ENCODE measurements at regions of chr6 and their contacts with region 1.

Region 1: DNA sequence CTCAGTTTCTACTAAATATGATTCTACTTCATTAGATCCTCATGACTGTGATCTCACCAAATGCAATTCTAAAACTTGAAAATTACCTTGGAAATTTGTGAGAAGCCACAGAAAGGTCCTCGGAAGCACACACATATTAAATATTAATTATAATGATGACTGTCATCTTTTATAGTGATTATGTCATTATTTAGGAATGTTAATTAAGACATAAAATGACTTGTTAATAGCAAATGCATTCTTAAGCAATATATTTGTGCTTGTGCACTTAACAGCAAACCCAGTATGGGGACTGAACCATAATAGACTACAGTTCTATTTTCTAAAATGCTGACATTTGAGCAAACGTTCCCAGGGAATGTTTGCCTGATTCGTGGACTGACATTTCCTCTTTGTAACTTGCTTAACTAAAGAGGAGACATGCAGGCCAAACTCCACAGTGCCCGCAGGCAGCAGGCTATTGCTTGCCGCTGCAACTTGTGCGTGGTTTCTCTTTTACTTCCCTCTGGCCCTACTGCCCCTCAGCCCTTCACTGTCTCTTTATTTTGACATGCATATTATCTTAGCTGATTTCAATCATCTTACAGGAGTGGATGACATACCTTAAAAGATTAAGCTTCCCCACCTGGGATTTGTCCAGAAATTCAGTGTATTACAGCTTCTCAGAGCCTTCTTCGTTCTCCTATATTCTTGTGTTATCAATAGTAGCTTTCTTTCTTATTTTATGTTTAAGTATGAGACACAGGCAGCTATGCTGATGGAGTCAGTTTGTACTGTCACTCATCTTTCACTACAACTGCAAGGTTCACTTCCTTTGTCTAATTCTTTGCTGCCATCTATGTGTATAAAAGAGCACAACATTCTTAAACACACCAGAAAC is 141.5 kb downstream of the GMDS start:
- DNase-seq: peak; percentile 71
- ATAC-seq: peak; percentile 90
- H3K4me3 ChIP-seq: no peak overlapping the region
- H3K27ac ChIP-seq: no peak overlapping the region
- H3K4me1 ChIP-seq: peaks cover 4% of the 10 kb centered on the region; the same call in 1 of the 2 replicates
- H3K27me3 ChIP-seq: no peaks in the 10 kb centered on the region
- CTCF ChIP-seq: peak; percentile 85

Region 2: DNA sequence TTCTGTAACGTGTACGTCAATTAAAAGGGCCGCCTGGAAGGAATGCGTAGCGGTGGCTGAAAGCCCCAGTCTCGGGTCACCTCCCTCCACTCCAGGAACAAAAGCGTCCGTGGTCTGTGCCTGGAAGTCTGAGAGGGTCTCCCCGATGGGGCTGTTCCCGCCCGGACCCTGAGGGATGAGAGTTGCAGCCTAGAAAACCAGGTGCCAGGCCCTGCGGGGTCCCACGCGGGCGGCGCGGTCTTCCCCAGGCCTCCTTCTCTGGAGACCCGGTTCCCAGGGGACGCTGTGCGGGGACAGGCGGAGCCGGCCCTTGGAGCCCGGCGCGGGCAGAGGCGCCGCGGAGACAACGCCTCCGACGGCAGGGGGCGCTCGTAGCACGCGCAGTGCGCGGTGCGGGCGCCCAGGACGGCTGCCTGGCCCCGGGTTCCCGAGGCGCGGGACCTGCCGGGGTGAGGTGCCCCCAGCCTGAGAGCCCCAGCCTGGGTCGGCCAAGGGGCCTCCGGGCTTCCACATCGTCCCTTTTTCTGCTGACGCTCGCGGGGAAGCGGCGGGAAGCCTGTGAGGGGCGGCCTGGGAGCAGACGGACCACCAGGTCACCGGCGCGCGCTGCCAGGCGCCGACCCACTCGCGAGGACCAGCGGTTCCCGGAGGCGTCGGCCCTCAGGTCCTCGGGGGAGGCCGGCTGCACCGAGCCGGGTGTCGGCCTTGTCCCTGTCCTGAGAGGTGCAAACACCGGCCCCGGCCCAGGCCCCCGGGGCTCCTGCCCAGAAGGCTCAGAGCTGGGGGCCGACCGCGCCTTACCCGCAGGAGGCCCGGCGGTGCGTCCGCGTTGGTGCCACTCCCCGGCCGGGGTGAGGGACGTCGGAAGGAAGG is 499.5 kb before region 1 on chr6:
- CTCF ChIA-PET with region 1: no interaction called
- POLR2A ChIA-PET with region 1: no interaction called
- intact Hi-C with region 1: loop called (anchors 1 kb)
- DNase-seq: peak; percentile 89
- ATAC-seq: peak; percentile 95
- H3K4me3 ChIP-seq: peak overlapping the region; percentile 76
- H3K27ac ChIP-seq: no peak overlapping the region
- H3K4me1 ChIP-seq: peaks cover 13% of the 10 kb centered on the region; the same call in 1 of the 2 replicates
- H3K27me3 ChIP-seq: no peaks in the 10 kb centered on the region
- CTCF ChIP-seq: peak; percentile 89

Region 3: DNA sequence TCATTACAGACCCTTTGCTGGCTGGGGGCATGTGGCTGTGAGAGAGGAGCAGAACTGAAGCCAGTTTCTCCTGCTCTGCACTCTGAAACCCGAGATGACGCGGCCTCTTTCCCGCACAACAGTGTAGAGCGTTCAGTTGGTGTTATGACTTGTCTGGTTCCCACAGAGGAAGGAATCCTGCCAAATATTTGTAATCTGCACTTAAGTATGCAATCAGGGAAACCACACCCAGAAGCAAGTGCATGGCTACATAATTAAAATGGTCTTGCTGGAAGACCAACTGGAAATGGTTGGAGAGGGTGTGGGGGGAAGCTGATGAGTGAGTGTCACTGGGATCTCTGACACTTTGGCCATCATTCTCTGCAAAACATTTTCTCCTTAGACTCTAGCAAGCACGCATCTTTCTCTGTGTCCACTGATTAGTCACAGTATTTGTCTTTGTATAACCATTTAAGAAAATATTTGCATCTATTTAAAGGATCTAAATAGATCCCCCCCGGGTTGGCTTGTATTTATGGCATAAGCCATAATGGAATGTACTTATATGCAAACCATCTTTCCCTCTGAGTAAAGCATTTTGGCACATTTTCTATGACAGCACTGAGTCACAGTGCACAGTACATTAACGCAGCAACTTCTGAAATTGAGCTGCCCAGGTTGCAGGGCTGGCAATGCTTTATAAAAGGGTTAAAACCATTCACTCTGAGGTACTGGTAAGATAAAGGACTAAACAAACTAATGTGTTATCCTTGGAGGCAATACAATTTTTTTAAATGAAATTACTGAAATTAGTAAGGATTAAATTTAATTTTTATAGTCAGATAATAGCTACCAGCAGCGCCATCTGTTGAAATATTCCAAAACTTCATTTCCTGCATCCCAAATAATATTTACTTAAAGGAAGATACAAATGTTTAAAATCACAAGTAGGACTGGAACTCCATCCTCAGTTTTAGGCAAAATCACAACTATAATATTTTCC is 417.5 kb before region 1 on chr6:
- CTCF ChIA-PET with region 1: no interaction called
- POLR2A ChIA-PET with region 1: no interaction called
- intact Hi-C with region 1: loop called (anchors 5 kb)
- DNase-seq: peak; percentile 94
- ATAC-seq: peak; percentile 78
- H3K4me3 ChIP-seq: peak overlapping the region; percentile 34; the same call in 1 of the 2 replicates
- H3K27ac ChIP-seq: peak overlapping the region; percentile 92
- H3K4me1 ChIP-seq: peaks cover 55% of the 10 kb centered on the region
- H3K27me3 ChIP-seq: no peaks in the 10 kb centered on the region
- CTCF ChIP-seq: peak; percentile 74

Region 4: GRCh38 chr6:1838604-1839213 is 265.2 kb before region 1 on chr6:
- CTCF ChIA-PET with region 1: no interaction called
- POLR2A ChIA-PET with region 1: no interaction called
- intact Hi-C with region 1: loop called (anchors 5 kb)
- DNase-seq: peak; percentile 68
- ATAC-seq: peak; percentile 56
- H3K4me3 ChIP-seq: no peak overlapping the region
- H3K27ac ChIP-seq: no peak overlapping the region; the same call in 1 of the 2 replicates
- H3K4me1 ChIP-seq: peaks cover 42% of the 10 kb centered on the region
- H3K27me3 ChIP-seq: no peaks in the 10 kb centered on the region
- CTCF ChIP-seq: no peak

Region 5: DNA sequence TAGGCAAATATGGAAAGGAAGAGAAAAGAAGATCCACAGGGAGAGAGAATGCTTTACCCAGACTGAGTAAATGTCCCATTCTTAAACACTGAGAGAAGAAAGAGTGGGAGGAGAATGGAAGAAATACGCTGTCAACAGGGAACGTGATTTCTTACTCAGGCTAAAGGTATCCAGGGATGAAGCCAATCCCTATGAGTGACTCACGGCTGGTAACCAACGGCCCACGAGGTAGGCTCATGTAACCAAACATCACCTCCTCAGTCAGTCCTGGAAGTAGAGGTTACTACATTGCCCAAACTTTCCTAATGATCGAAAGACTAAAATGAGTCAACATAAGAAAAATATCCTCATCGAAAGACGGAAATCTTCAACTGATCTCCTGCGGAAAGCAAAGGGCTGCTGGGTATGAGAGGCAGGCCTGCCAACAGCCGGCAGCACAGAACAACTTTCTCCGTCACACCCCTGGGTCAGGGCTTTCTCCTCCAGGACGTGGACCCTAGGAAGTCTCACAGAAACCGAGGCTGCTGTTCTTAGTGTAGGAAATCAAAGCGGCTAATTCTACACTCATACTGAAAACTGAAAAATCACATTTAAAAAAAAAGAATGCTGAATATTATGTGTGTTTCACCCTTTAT is 151.0 kb before region 1 on chr6:
- CTCF ChIA-PET with region 1: no interaction called
- POLR2A ChIA-PET with region 1: no interaction called
- intact Hi-C with region 1: loop called (anchors 5 kb)
- DNase-seq: peak; percentile 97
- ATAC-seq: peak; percentile 100
- H3K4me3 ChIP-seq: peak overlapping the region; percentile 47; the same call in 1 of the 2 replicates
- H3K27ac ChIP-seq: peak overlapping the region; percentile 80
- H3K4me1 ChIP-seq: peaks cover 16% of the 10 kb centered on the region
- H3K27me3 ChIP-seq: no peaks in the 10 kb centered on the region
- CTCF ChIP-seq: peak; percentile 32; the same call in 1 of the 2 replicates

Region 6: DNA sequence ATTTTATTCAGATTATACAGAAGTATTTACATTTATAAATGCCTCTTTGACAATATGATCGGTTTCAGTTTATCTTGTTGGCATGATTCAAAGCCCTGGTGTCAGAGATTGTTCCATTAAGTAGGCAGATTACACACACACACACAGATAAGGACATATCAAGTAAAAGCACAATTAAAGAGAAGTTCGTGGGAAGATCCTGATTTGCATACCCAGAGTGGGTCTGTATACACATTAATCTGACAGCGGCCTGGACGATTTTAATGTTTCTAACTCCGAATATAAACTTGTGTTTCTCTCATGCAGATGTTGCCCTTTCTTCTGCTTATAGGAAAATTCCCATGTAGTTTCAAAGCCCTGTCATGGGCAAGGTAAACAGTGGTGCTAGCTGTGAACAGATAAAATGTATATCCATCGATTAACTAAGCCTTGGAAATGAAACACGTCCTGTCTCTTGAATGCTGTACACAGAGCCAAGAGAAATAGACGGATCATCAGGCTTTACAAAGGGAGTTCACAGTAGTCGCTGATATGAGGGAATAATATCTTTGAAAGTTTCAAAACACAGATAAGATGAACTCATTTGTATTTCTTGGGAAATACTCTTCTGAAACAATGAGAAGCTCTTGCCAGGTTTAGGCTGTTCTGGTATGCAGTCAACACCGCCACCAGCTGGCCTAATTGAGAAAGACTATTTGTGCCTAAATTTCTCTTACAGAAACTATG is 249.7 kb after region 1 on chr6:
- CTCF ChIA-PET with region 1: no interaction called
- POLR2A ChIA-PET with region 1: no interaction called
- intact Hi-C with region 1: loop called (anchors 2 kb)
- DNase-seq: peak; percentile 90
- ATAC-seq: peak; percentile 61
- H3K4me3 ChIP-seq: no peak overlapping the region
- H3K27ac ChIP-seq: no peak overlapping the region
- H3K4me1 ChIP-seq: no peaks in the 10 kb centered on the region
- H3K27me3 ChIP-seq: no peaks in the 10 kb centered on the region
- CTCF ChIP-seq: peak; percentile 94

Region 7: DNA sequence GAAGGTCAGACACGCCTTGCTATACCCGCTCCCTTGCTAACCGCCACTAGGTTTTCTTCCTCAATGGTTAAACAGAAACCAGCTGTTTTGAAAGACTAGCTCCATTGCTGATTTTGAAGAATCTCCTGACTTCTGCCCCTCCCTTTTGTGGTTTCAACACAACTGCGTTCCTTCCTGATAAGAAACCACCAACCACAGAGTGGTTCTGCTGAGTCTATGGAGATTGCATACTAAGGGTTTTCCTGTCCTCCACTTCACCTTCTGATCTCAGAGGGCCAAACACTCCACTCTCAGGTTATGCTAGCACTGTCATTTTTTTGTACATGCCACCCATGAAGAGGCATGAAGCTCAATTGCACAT is 439.0 kb after region 1 on chr6:
- CTCF ChIA-PET with region 1: no interaction called
- POLR2A ChIA-PET with region 1: no interaction called
- intact Hi-C with region 1: no loop called
- DNase-seq: peak; percentile 54
- ATAC-seq: no peak; the same call in 1 of the 2 replicates
- H3K4me3 ChIP-seq: no peak overlapping the region
- H3K27ac ChIP-seq: no peak overlapping the region
- H3K4me1 ChIP-seq: peaks cover 14% of the 10 kb centered on the region
- H3K27me3 ChIP-seq: no peaks in the 10 kb centered on the region
- CTCF ChIP-seq: no peak

Measured in PC-3 (cell line).